ENCODE measurements at regions of chr13 and their contacts with region 1.

Region 1: GRCh38 chr13:110347535-110348308 is 40.6 kb downstream of the COL4A2 start:
- DNase-seq: peak; percentile 84 to 98
- H3K4me3 ChIP-seq: peak overlapping the region; percentile 9; the same call in 1 of the 2 replicates
- H3K27ac ChIP-seq: peak overlapping the region; percentile 83
- H3K4me1 ChIP-seq: peaks cover 63% of the 10 kb centered on the region
- H3K27me3 ChIP-seq: no peaks in the 10 kb centered on the region
- CTCF ChIP-seq: no peak

Region 2: DNA sequence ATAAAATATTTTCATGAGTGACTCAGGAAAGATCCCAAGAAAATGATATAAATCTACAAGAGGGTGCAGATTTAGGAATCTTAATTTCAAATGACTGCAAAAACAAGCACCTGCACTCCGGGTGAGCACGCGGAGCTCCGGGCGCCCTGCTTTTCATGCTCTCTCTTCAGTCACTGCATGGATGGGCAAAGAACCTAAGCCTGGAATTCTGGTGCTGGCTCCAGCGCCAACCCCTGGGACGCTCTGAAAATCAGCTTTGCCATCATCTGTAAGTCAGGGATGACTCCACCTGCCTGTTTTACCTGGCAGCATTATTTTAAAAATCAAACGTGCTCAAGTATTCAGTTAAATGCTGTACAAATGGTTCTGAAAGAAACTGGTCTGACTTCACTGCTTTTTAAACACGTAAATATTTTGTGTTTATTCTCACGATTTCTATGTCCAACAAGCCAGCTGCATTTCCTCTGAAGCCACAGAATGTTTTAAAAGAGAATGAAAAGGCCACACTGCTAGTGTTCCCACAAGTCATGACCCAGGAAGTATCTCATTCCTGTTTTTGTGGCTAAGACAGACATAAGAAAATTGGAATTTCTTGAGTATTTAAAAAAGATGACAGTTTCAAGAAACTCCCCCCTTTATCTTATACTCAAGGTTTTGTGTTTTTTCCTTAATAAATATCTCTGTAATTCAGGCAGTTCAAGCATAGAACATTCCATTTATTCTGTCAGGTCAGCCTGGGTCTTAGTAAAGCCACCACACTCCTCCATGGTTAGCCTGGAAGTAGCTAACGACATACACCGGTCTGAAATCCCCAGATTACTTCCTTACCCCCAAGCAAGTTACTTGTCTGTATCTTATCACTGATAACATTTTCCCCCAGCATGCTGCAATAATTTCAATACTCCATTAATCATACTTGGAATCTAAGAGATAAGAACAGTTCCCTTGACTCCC is 121.8 kb before region 1 on chr13:
- CTCF ChIA-PET with region 1: no interaction called
- POLR2A ChIA-PET with region 1: interaction called, 6 read pairs
- intact Hi-C with region 1: loop called (anchors 1 kb)
- DNase-seq: peak in 1 of 2 experiments; percentile 94
- H3K4me3 ChIP-seq: no peak overlapping the region
- H3K27ac ChIP-seq: peak overlapping the region; percentile 60
- H3K4me1 ChIP-seq: peaks cover 29% of the 10 kb centered on the region
- H3K27me3 ChIP-seq: no peaks in the 10 kb centered on the region
- CTCF ChIP-seq: no peak

Region 3: DNA sequence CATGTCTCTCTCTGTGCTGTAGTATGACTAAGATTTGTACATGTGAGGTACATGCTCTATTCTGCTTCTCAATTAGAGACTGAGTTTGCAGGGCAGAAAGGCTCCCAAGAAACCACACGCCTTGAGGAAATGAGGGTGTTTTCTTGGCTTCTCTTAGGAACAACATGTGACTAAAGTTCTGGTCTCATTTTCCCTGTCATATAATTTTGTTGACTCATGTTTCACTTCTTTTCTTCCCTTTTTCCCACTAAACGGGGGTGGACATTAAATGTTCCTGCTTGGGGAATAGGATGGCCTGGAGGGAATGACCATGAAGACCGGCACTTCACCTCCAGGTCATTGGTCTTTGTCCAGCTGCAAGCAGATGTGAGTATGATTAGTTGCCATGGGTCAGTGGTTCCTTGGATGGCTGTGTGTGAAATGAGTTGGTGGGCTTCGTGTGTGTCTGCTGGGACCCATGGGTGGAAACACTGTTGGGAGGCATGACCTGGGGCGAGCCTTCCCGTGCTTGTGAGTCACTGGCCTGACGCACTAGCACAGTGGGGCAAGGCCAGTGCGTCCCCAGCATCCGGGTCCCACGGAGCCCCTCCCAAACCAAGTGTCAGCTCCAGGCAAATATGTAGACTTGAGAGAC is 97.3 kb before region 1 on chr13:
- CTCF ChIA-PET with region 1: interaction called, 4 read pairs
- POLR2A ChIA-PET with region 1: interaction called, 5 read pairs
- intact Hi-C with region 1: loop called (anchors 1 kb)
- DNase-seq: no peak
- H3K4me3 ChIP-seq: no peak overlapping the region
- H3K27ac ChIP-seq: no peak overlapping the region
- H3K4me1 ChIP-seq: peaks cover 5% of the 10 kb centered on the region; the same call in 1 of the 2 replicates
- H3K27me3 ChIP-seq: no peaks in the 10 kb centered on the region
- CTCF ChIP-seq: no peak

Region 4: GRCh38 chr13:110286833-110287828 is 60.6 kb before region 1 on chr13:
- CTCF ChIA-PET with region 1: no interaction called
- POLR2A ChIA-PET with region 1: no interaction called
- intact Hi-C with region 1: loop called (anchors 1 kb)
- DNase-seq: peak; percentile 71 to 93
- H3K4me3 ChIP-seq: peak overlapping the region; percentile 8; the same call in 1 of the 2 replicates
- H3K27ac ChIP-seq: peak overlapping the region; percentile 56
- H3K4me1 ChIP-seq: peaks cover 24% of the 10 kb centered on the region
- H3K27me3 ChIP-seq: no peaks in the 10 kb centered on the region
- CTCF ChIP-seq: no peak

Region 5: DNA sequence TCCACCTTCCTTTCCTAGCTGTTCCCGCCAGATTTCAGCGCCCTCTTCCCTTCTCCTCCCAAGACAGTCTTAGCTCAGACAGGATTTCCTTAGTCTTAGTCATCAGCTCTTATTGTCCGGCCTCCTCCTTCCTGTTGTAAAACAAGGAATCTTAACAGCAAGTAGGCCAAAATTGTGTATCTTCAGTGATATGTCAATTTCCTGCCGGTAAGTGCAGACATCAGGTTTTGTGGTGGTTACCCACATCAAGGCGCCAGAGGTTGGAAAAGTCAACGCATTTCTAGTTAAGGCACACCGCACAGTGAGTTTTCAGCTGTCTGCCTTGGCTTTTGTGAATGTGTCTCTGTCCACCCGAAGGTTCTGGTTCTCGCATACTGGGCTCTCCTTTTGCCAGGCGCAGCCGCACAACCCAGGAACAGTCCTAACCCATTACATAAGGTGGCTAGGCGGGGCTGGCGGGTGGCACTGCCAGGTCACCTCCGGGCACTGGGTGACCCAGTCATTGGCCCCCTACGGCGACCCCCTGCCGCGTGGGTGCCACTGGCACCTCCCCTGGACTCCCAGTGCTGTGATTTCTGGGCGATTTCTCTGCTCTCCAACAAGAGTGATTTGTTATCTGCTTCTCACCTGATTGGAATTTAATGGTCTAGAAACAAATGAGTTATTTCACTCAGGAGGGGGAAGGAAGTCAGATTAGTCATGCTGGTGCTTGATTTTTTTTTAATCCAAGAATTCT is 27.8 kb before region 1 on chr13:
- CTCF ChIA-PET with region 1: no interaction called
- POLR2A ChIA-PET with region 1: interaction called, 3 read pairs
- intact Hi-C with region 1: loop called (anchors 1 kb)
- DNase-seq: peak; percentile 89 to 99
- H3K4me3 ChIP-seq: peak overlapping the region; percentile 44; the same call in 1 of the 2 replicates
- H3K27ac ChIP-seq: peak overlapping the region; percentile 95
- H3K4me1 ChIP-seq: peaks cover 46% of the 10 kb centered on the region
- H3K27me3 ChIP-seq: no peaks in the 10 kb centered on the region
- CTCF ChIP-seq: no peak

Region 6: GRCh38 chr13:110387391-110388107 is 39.8 kb after region 1 on chr13:
- CTCF ChIA-PET with region 1: no interaction called
- POLR2A ChIA-PET with region 1: no interaction called
- intact Hi-C with region 1: loop called (anchors 1 kb)
- DNase-seq: no peak
- H3K4me3 ChIP-seq: no peak overlapping the region
- H3K27ac ChIP-seq: peak overlapping the region; percentile 64; the same call in 1 of the 2 replicates
- H3K4me1 ChIP-seq: peaks cover 48% of the 10 kb centered on the region
- H3K27me3 ChIP-seq: no peaks in the 10 kb centered on the region
- CTCF ChIP-seq: no peak

Region 7: GRCh38 chr13:110455941-110456340 is 108.2 kb after region 1 on chr13:
- CTCF ChIA-PET with region 1: no interaction called
- POLR2A ChIA-PET with region 1: no interaction called
- intact Hi-C with region 1: no loop called
- DNase-seq: peak; percentile 78 to 83
- H3K4me3 ChIP-seq: no peak overlapping the region
- H3K27ac ChIP-seq: no peak overlapping the region
- H3K4me1 ChIP-seq: peaks cover 26% of the 10 kb centered on the region
- H3K27me3 ChIP-seq: no peaks in the 10 kb centered on the region
- CTCF ChIP-seq: peak; percentile 96

Measured in PC-9 (cell line).